ENCODE measurements at regions of chr2 and their contacts with region 1.

Region 1: GRCh38 chr2:74206180-74206688 is 7.8 kb downstream of the MTHFD2 start:
- DNase-seq: peak; percentile 57
- H3K4me3 Mint-ChIP-seq: peak overlapping the region; percentile 43
- H3K27ac Mint-ChIP-seq: peak overlapping the region; percentile 75
- H3K4me1 Mint-ChIP-seq: peaks cover 33% of the 10 kb centered on the region
- H3K27me3 Mint-ChIP-seq: no peaks in the 10 kb centered on the region
- CTCF ChIP-seq: no peak

Region 2: DNA sequence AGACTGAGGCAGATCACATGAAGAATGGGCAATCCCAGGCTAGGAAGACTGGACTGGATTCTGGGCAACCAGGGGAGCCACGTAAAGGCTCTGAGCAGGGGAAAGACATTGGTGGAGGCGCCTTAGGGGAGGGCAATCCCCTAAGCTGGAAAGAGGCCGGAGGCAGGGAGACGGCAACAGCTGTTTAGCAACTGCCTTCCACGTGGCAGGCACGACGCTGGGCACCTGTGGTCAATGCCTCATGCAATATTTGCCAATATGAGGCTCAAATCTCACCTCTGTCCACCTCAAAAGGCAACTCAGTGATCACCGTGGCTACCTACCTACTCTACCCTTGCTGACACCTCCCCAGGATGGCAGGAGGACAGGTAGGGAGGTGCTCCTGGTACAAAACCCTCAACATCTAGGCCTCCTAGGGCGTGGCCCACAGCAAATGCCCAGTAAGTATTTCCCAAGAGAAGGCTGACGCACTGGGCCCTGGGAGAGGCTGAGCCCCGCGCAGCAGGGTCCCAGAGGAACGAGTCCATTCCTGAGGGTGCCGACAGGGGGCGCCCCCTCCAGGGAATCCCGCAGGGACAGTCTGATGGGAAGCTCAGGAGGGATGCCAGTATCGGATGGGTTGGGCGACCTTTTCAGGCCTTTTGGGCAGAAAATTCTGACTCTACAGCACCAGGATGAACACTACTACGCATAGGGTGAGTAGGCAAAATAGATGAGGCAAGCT is 67.5 kb before region 1 on chr2:
- CTCF ChIA-PET with region 1: no interaction called
- POLR2A ChIA-PET with region 1: no interaction called
- intact Hi-C with region 1: no loop called
- DNase-seq: no peak
- H3K4me3 Mint-ChIP-seq: no peak overlapping the region
- H3K27ac Mint-ChIP-seq: no peak overlapping the region
- H3K4me1 Mint-ChIP-seq: peaks cover 6% of the 10 kb centered on the region
- H3K27me3 Mint-ChIP-seq: no peaks in the 10 kb centered on the region
- CTCF ChIP-seq: no peak

Region 3: GRCh38 chr2:74188018-74188601 is 18.1 kb before region 1 on chr2:
- CTCF ChIA-PET with region 1: interaction called, 3 read pairs
- POLR2A ChIA-PET with region 1: interaction called, 57 read pairs
- intact Hi-C with region 1: no loop called
- DNase-seq: peak; percentile 93
- H3K4me3 Mint-ChIP-seq: peak overlapping the region; percentile 42
- H3K27ac Mint-ChIP-seq: peak overlapping the region; percentile 64
- H3K4me1 Mint-ChIP-seq: peaks cover 15% of the 10 kb centered on the region
- H3K27me3 Mint-ChIP-seq: no peaks in the 10 kb centered on the region
- CTCF ChIP-seq: no peak

Region 4: GRCh38 chr2:74216642-74217041 is 10.4 kb after region 1 on chr2:
- CTCF ChIA-PET with region 1: interaction called, 10 read pairs
- POLR2A ChIA-PET with region 1: interaction called, 7 read pairs
- intact Hi-C with region 1: no loop called
- DNase-seq: no peak
- H3K4me3 Mint-ChIP-seq: no peak overlapping the region
- H3K27ac Mint-ChIP-seq: no peak overlapping the region
- H3K4me1 Mint-ChIP-seq: no peaks in the 10 kb centered on the region
- H3K27me3 Mint-ChIP-seq: no peaks in the 10 kb centered on the region
- CTCF ChIP-seq: no peak